Activated CD8-positive, alpha-beta T cell treated with anti-CD3 and anti-CD28 coated beads for 36 hours (primary cell): ENCODE measurements at regions of chr7 and their contacts with region 1.

Region 1: GRCh38 chr7:29194594-29195427 is at the start of gene CHN2:
- DNase-seq: peak; percentile 70
- ATAC-seq: peak; percentile 77
- H3K4me3 Mint-ChIP-seq: peak within 1 kb of the TSS; percentile 85
- H3K27ac Mint-ChIP-seq: peak within 1 kb of the TSS; percentile 82
- H3K4me1 Mint-ChIP-seq: peaks cover 23% of the 10 kb centered on the region
- H3K27me3 Mint-ChIP-seq: peaks cover 36% of the 10 kb centered on the region
- CTCF ChIP-seq: no peak
- total RNA-seq, gene CHN2: 1.7 to 1.8 TPM

Region 2: DNA sequence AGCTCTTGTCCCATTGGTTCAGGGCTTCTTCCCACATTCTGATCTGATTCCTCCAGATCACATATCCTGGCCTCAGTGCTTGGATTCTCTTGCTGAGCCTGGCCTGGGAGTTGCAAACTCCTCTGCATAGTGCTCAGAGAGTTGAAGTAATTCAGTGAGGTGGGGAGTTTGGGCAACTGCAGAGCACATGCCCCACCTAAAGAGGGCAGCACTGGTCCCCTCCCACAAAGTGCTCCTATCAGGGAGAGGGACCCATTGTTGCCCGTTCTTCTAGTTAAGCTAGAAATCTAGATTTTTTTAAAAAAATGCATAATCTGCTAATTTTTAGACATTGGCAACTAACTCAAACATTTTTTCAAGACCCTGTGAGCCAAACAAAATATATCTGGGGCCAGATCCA is 44.8 kb after region 1 on chr7:
- CTCF ChIA-PET with region 1: interaction called, 7 read pairs
- POLR2A ChIA-PET with region 1: interaction called, 3 read pairs
- intact Hi-C with region 1: loop called (anchors 5 kb)
- DNase-seq: peak; percentile 28
- ATAC-seq: no peak
- H3K4me3 Mint-ChIP-seq: no peak overlapping the region
- H3K27ac Mint-ChIP-seq: no peak overlapping the region
- H3K4me1 Mint-ChIP-seq: peaks cover 20% of the 10 kb centered on the region
- H3K27me3 Mint-ChIP-seq: no peaks in the 10 kb centered on the region
- CTCF ChIP-seq: peak; percentile 55

Region 3: GRCh38 chr7:29285444-29285793 is 90.6 kb after region 1 on chr7:
- CTCF ChIA-PET with region 1: interaction called, 7 read pairs
- POLR2A ChIA-PET with region 1: interaction called, 3 read pairs
- intact Hi-C with region 1: loop called (anchors 5 kb)
- DNase-seq: peak; percentile 79
- ATAC-seq: peak; percentile 83
- H3K4me3 Mint-ChIP-seq: no peak overlapping the region
- H3K27ac Mint-ChIP-seq: no peak overlapping the region
- H3K4me1 Mint-ChIP-seq: peaks cover 32% of the 10 kb centered on the region
- H3K27me3 Mint-ChIP-seq: peaks cover 6% of the 10 kb centered on the region
- CTCF ChIP-seq: no peak

Region 4: GRCh38 chr7:29337546-29338116 is 142.8 kb after region 1 on chr7:
- CTCF ChIA-PET with region 1: interaction called, 10 read pairs
- POLR2A ChIA-PET with region 1: no interaction called
- intact Hi-C with region 1: loop called (anchors 5 kb)
- DNase-seq: peak; percentile 47
- ATAC-seq: peak; percentile 91
- H3K4me3 Mint-ChIP-seq: peak overlapping the region; percentile 27
- H3K27ac Mint-ChIP-seq: peak overlapping the region; percentile 66
- H3K4me1 Mint-ChIP-seq: peaks cover 39% of the 10 kb centered on the region
- H3K27me3 Mint-ChIP-seq: no peaks in the 10 kb centered on the region
- CTCF ChIP-seq: no peak